ENCODE measurements at regions of chr9 and their contacts with region 1.

Region 1: GRCh38 chr9:114681594-114682332 is at the start of gene TEX48:
- DNase-seq: no peak
- H3K4me3 ChIP-seq: no peak within 1 kb of the TSS
- H3K27me3 ChIP-seq: no peaks in the 10 kb centered on the region; the same call in 1 of the 2 replicates
- CTCF ChIP-seq: peak; percentile 82
- polyA plus RNA-seq, gene TEX48: not detected in 2 replicates

Region 2: DNA sequence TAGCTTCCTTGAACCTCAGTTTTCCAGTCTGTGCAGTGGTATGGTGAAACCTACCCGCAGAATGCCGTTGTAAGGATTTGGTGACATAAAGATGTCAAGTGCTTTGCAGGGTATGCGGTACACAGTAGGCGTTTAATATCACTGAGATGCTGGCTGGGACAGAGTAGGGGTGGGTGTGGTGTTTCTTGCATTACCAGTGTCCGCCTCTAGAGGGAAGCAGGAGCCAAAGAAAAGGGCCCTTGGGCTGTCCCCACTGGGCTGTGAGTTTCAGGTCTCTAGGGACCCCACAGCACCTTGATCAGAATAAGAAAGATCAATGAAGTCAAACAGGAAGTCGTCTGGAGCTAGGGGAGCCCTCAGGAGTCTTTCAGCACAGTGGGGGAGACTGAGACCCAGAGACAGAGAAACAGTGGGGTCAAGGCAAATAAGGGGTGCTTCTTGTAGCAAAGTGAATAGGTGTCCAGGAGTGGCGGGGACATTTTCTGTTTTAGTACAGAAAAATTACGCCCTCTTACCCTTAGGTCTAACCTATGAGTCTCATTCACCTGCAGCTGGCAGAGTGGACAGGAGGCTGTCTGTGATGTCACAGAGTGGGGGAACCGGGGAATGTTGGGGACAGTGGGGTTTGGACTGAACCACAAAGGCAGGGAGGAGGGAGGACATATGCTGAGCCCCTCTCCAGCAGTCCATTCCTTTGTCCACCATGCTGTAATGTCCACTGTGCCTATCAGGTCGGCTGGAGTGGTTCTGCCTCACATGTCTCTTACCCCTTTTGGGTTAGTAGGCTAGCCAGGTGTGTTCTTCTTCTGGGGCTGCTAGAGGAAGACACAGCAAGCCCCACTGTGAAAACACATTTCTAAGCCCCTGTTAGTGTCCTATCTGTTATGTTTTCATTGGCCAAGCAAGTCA is 19.4 kb before region 1 on chr9:
- CTCF ChIA-PET with region 1: interaction called, 28 read pairs
- POLR2A ChIA-PET with region 1: no interaction called
- DNase-seq: no peak
- H3K4me3 ChIP-seq: no peak overlapping the region
- H3K27me3 ChIP-seq: peaks cover 8% of the 10 kb centered on the region
- CTCF ChIP-seq: peak; percentile 89

Region 3: GRCh38 chr9:114721491-114722079 is 39.8 kb after region 1 on chr9:
- CTCF ChIA-PET with region 1: interaction called, 19 read pairs
- POLR2A ChIA-PET with region 1: no interaction called
- DNase-seq: no peak
- H3K4me3 ChIP-seq: no peak overlapping the region
- H3K27me3 ChIP-seq: peaks cover 11% of the 10 kb centered on the region
- CTCF ChIP-seq: no peak

Region 4: DNA sequence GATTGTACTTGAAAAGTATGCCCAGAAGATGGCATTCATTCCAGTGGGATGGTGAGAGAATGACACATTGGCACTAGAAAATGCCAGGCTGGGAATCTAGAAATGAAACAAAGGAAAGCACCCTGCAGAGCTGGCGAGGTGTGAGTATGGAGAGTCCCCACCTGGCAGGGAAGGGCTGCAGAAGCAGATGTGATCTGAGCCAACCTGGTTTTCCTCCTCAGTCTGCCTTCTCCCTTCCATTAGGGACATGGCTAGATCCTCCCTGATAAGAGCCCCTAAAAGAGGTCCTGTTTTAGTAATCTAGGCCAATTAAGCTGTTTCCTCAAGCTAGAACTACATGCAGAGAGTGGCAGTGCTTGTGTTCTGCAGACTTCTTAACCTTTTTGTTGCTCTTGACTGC is 148.8 kb after region 1 on chr9:
- CTCF ChIA-PET with region 1: no interaction called
- POLR2A ChIA-PET with region 1: no interaction called
- DNase-seq: no peak
- H3K4me3 ChIP-seq: no peak overlapping the region
- H3K27me3 ChIP-seq: peaks cover 4% of the 10 kb centered on the region
- CTCF ChIP-seq: no peak

Region 5: GRCh38 chr9:114898741-114899140 is 217.0 kb after region 1 on chr9:
- CTCF ChIA-PET with region 1: interaction called, 195 read pairs
- POLR2A ChIA-PET with region 1: no interaction called
- DNase-seq: no peak
- H3K4me3 ChIP-seq: no peak overlapping the region
- H3K27me3 ChIP-seq: no peaks in the 10 kb centered on the region
- CTCF ChIP-seq: no peak

Region 6: DNA sequence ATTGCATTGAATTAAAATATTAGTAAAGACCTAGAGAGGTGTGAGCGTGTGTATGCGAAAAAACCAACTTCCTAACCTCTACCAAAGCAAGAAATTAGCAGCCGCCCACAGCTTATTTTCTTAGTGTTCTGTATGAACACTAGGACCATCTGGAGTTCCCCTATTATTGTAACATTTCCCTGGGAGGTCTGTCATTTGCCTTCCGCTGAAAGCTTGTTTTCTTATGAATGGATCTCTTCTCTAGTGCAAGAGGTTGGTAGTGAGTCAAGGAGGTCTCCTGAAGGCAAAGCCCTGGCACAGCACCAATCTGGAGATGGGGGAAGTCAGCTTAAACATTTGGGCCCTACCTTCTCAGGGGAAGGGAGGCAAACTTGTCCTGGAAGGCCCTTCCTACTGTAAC is 237.8 kb after region 1 on chr9:
- CTCF ChIA-PET with region 1: interaction called, 195 read pairs
- POLR2A ChIA-PET with region 1: no interaction called
- DNase-seq: no peak
- H3K4me3 ChIP-seq: no peak overlapping the region
- H3K27me3 ChIP-seq: peaks cover 10% of the 10 kb centered on the region
- CTCF ChIP-seq: no peak

Region 7: GRCh38 chr9:115013998-115014397 is 332.2 kb after region 1 on chr9:
- CTCF ChIA-PET with region 1: interaction called, 61 read pairs
- POLR2A ChIA-PET with region 1: no interaction called
- DNase-seq: no peak
- H3K4me3 ChIP-seq: no peak overlapping the region
- H3K27me3 ChIP-seq: peaks cover 2% of the 10 kb centered on the region; the same call in 1 of the 2 replicates
- CTCF ChIP-seq: peak; percentile 75